Colonic mucosa (tissue), 4 donors: ENCODE measurements at regions of chr3 and their contacts with region 1.

Region 1: DNA sequence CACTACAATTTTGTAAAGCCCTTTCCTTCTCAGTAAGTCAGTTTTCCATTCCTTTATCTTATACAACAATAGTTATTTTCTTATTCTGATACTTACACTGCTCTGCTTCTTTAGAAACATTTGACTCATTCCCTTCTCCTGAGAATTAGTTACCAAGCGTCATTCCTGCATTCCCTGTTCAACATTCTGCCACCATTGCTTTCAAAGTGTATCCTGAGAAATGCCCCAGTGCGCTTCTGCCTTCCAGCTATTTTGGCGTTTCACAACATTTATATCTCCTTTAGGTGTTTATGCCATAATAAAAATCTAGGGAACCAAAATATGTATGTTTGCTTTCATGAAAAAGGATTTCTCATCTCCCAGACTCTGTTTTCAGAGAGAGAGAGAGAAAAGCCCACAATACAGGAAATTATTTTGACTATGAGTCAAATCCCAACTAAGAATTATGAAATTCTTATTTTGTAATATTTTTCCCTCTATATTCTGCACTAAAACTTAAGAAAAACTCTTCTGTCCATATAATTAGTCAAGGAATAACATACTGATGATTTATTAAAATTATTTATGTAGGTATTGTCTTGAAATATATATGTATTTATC is 118.2 kb upstream of the RAP2B start:
- DNase-seq: no peak
- H3K4me3 ChIP-seq: no peak overlapping the region
- H3K27ac ChIP-seq: no peak overlapping the region
- H3K4me1 ChIP-seq: no peaks in the 10 kb centered on the region
- H3K27me3 ChIP-seq: no peaks in the 10 kb centered on the region
- CTCF ChIP-seq: no peak

Region 2: GRCh38 chr3:153161138-153161713 is 117.4 kb after region 1 on chr3:
- intact Hi-C with region 1: loop called (anchors 5 kb)
- DNase-seq: peak; percentile 95
- H3K4me3 ChIP-seq: peak overlapping the region; percentile 84
- H3K27ac ChIP-seq: peak overlapping the region; percentile 97
- H3K4me1 ChIP-seq: peaks cover 3% of the 10 kb centered on the region
- H3K27me3 ChIP-seq: no peaks in the 10 kb centered on the region
- CTCF ChIP-seq: no peak

Region 3: DNA sequence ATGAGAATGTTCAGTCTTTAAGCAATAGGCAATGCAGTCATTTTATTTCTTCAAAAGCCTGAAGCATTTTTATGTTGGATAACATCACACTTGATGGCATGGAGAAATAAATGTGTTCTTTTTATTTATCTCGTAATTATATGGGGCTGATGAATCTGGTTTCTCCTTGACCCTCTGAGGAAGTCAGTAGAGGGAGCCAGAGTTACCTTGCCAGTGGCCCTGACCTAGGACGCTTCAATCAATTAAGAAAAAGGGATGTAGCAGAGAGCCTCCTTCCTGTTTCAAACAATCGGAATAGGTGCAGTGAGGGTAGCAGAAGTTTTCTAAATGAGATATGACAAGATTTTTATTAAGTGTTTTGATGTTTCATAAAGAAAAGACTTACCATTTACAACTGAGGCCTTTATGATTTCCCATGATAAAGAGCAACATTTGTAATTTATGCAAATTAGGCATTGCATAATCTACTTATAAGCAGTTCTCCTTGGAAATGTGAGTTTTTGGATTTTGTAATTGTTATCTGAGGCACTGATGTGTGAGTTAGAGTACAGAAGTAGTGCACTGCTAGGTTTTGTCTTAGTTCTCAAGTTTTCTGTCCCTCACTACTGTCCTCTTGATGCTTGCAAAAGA is 247.3 kb after region 1 on chr3:
- intact Hi-C with region 1: loop called (anchors 5 kb)
- DNase-seq: no peak
- H3K4me3 ChIP-seq: no peak overlapping the region
- H3K27ac ChIP-seq: no peak overlapping the region
- H3K4me1 ChIP-seq: no peaks in the 10 kb centered on the region
- H3K27me3 ChIP-seq: no peaks in the 10 kb centered on the region
- CTCF ChIP-seq: peak; percentile 34

Region 4: GRCh38 chr3:153595186-153595815 is 551.5 kb after region 1 on chr3:
- intact Hi-C with region 1: loop called (anchors 10 kb)
- DNase-seq: no peak
- H3K4me3 ChIP-seq: no peak overlapping the region
- H3K27ac ChIP-seq: no peak overlapping the region
- H3K4me1 ChIP-seq: no peaks in the 10 kb centered on the region
- H3K27me3 ChIP-seq: no peaks in the 10 kb centered on the region
- CTCF ChIP-seq: peak; percentile 40

Region 5: DNA sequence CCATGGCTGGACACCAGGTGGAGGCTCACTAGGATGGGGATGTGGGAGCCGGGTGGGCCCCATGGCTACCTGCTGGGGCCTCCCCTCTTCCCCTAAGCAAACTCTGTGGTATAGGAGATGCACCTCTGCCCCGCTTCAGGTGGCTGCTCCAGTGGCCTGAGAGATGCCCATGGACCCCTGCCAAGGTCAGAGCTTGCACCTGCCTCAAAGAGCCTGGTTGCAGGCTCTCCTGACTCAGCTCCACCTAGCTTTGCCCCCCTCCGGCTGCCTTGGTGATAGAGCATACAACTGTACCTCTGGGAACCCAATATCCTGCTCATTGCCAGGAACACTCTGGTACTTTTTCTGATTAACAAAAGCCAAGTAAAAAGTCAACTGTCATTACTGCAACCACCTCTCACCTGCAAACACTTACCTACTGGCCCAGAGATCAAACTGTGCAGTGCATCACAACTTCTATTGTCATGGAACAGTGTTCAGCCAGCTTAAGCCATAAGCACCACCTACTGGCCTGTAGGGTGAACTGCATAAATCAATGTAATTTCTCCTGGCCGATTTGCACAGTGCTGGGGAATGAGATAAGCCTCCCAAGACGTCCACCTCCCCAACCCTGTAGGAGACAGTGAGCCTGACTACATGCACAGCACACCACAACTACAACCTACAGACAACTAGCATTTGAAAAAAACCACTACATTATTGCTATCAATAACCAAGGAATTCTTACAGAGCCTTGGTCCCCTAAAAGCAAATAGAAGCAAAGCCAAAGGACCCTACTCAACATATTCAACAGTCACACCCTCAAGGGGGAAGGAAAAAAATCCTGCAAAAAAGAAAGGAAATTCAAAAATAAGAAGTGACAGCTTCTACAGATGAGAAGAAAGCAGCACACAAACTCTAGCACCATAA is 725.0 kb after region 1 on chr3:
- intact Hi-C with region 1: loop called (anchors 5 kb)
- DNase-seq: peak; percentile 56
- H3K4me3 ChIP-seq: no peak overlapping the region
- H3K27ac ChIP-seq: no peak overlapping the region
- H3K4me1 ChIP-seq: no peaks in the 10 kb centered on the region
- H3K27me3 ChIP-seq: no peaks in the 10 kb centered on the region
- CTCF ChIP-seq: peak; percentile 82

Region 6: DNA sequence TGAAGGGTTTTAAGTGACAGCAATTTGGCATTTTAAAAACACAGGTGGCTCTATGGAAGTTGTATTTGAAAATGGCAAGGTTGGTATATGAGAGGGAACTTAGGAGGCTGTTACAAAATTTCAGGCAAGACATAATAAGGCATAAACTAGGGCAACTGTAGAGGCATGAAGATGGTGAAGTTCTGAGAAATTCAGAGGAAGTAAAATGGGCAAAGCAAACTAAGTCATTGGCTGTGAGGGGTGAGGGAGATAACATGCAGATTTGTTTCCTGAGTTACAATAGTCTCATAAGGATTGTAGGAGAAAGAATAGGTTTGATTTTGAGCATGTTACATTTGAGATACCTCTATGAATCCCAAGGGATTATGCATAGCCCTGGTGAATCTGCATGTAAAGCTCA is 774.5 kb after region 1 on chr3:
- intact Hi-C with region 1: no loop called
- DNase-seq: no peak
- H3K4me3 ChIP-seq: no peak overlapping the region
- H3K27ac ChIP-seq: no peak overlapping the region
- H3K4me1 ChIP-seq: no peaks in the 10 kb centered on the region
- H3K27me3 ChIP-seq: no peaks in the 10 kb centered on the region
- CTCF ChIP-seq: no peak